ENCODE measurements at regions of chrX and their contacts with region 1.

Region 1: DNA sequence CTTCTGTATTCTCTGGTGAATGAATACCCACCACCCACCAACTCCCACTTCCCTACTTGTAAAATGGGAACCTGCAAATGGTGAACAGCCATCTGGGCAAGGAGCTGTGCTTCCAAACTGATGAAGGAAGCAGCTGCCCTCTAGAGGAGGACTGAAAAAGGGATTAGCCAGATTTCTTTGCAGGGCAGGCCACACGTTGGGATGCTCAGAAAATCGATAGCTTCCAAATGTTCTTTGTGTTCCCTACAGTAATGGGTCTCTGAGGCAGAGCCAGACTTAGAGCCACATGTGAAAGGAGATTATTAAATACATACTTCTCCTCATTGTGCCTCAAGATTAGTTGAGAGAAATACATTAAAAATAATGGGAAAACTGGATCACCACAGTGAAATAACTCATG is 39.3 kb upstream of the LPAR4 start:
- DNase-seq: no peak
- H3K4me3 ChIP-seq: no peak overlapping the region
- H3K27ac ChIP-seq: no peak overlapping the region
- H3K27me3 ChIP-seq: no peaks in the 10 kb centered on the region
- CTCF ChIP-seq: peak; percentile 65

Region 2: DNA sequence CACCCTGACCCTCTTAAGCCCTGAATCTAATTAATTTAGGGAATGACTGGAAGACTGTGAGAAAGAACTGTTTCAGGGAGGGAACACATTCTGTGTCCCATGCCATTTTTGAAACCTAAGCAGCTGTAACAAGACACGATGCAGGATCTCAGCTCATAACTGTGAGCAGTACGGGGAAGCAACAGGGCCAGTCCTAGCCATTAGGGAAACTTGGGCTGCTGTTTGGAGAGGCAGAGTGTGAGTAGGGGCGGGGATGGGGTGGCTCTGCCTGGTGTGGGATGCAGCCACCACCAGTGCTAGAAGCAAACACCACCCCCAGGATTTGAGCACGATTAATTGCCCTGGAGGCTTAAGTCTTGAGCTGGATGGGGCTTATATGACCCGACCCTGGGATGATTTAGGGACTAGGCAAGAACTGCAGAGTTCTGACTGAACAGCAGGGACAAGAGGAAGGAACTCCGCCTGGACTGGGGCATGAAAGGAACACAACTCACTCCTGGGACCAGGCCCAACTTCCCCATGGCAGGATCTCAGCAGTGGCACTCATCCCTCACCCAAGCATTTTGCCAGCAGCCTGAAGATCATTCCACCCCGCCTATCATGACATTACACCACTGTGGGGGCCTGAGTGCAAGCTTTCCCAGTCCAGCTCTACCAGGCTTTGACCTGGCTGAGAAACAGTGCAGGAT is 965.3 kb before region 1 on chrX:
- CTCF ChIA-PET with region 1: no interaction called
- POLR2A ChIA-PET with region 1: no interaction called
- DNase-seq: no peak
- H3K4me3 ChIP-seq: no peak overlapping the region
- H3K27ac ChIP-seq: no peak overlapping the region
- H3K27me3 ChIP-seq: no peaks in the 10 kb centered on the region
- CTCF ChIP-seq: no peak

Region 3: GRCh38 chrX:78555401-78555980 is 152.8 kb before region 1 on chrX:
- CTCF ChIA-PET with region 1: interaction called, 45 read pairs
- POLR2A ChIA-PET with region 1: no interaction called
- DNase-seq: no peak
- H3K4me3 ChIP-seq: no peak overlapping the region
- H3K27ac ChIP-seq: no peak overlapping the region
- H3K27me3 ChIP-seq: no peaks in the 10 kb centered on the region
- CTCF ChIP-seq: peak; percentile 44

Region 4: GRCh38 chrX:78595901-78596502 is 112.3 kb before region 1 on chrX:
- CTCF ChIA-PET with region 1: interaction called, 18 read pairs
- POLR2A ChIA-PET with region 1: no interaction called
- DNase-seq: no peak
- H3K4me3 ChIP-seq: no peak overlapping the region
- H3K27ac ChIP-seq: no peak overlapping the region
- H3K27me3 ChIP-seq: no peaks in the 10 kb centered on the region
- CTCF ChIP-seq: no peak

Region 5: DNA sequence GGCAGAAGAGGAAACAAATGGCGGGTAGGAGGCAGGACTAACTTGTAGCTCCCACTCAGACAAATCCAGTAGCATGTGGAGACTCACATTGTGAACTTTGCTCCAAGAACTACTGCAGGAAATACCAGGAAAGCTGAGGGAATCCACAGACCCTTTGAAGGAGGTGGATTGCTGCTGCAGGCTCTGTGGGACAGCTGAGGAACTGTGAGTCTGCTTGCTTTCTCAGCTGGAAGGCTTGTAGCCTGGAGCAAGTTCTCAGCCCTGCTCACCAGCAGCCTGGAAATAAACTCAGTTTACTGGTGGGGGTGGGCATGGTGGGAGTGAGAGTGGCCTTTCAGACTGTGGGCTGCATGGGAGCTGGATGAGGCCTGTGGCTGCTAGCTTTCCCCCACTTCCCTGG is 65.2 kb before region 1 on chrX:
- CTCF ChIA-PET with region 1: no interaction called
- POLR2A ChIA-PET with region 1: no interaction called
- DNase-seq: no peak
- H3K4me3 ChIP-seq: no peak overlapping the region
- H3K27ac ChIP-seq: no peak overlapping the region
- H3K27me3 ChIP-seq: no peaks in the 10 kb centered on the region
- CTCF ChIP-seq: no peak

Region 6: DNA sequence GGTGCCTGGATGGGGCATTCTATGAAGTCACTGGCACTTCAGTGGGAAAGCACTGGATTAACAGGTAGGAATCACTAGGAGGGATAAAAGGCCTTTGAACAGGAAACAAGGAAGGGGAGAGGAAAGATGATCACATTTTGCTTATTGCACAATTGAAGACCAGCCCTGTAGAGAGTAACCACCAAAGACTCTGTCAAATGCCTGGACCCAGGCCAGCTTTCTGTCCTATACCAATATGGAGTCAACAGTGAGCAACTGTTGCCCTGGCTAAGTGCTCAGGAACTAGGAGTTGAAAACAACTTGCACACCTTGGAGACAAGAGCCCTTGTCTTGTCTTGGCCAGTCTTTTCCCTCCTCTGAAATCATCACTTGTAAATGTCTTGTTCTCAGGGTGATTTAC is 35.0 kb before region 1 on chrX:
- CTCF ChIA-PET with region 1: no interaction called
- POLR2A ChIA-PET with region 1: no interaction called
- DNase-seq: no peak
- H3K4me3 ChIP-seq: no peak overlapping the region
- H3K27ac ChIP-seq: no peak overlapping the region
- H3K27me3 ChIP-seq: no peaks in the 10 kb centered on the region
- CTCF ChIP-seq: no peak

Region 7: DNA sequence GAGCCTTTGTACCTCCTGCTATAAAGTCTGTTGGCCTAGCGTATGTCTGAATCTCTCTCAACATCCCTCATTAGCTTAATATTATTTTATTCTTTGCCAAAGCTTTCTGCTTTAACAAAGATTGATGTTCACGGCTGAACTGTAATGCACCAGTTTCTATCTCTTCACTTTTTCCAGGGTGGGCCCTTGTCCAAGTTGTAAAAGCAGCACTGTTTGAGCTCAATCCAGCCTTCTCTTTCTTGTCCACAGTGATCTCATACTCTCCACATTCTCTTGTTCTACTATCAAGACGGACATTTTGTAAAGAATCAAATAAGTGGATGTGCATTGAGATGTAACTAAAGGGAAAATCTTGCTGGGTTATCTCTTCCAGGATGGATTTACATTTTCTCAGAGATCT is 14.7 kb before region 1 on chrX:
- CTCF ChIA-PET with region 1: no interaction called
- POLR2A ChIA-PET with region 1: no interaction called
- DNase-seq: no peak
- H3K4me3 ChIP-seq: no peak overlapping the region
- H3K27ac ChIP-seq: no peak overlapping the region
- H3K27me3 ChIP-seq: no peaks in the 10 kb centered on the region
- CTCF ChIP-seq: no peak